Caco-2 (cell line): ENCODE measurements at regions of chr9 and their contacts with region 1.

Region 1: DNA sequence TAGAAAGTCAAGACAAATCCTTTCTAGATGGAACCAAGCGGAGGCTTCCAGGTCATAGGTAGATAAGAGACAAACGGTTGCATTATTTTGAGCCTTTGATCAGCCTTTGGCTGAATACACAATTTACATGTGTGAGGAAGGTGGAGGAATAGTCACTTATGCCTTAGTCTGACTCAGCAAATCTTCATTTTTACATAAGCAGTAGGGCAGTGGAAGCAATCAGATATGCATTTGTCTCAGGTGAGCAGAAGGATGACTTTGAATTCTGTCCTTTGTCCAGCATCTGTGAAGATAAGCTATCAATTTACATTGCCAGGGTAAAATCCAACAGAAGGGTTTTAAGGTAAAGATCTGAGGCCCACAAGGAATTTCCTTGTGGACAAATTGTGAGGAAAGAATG is 23.8 kb downstream of the TUSC1 start:
- DNase-seq: peak in 1 of 2 experiments; percentile 12
- H3K4me3 ChIP-seq: no peak overlapping the region
- H3K4me3 Mint-ChIP-seq: no peak overlapping the region
- H3K27ac Mint-ChIP-seq: no peak overlapping the region
- H3K4me1 ChIP-seq: 0 out of 2 replicates have a peak, but pooled peaks cover 4% of the 10 kb centered on the region
- H3K4me1 Mint-ChIP-seq: peaks cover 8% of the 10 kb centered on the region
- H3K27me3 ChIP-seq: no peaks in the 10 kb centered on the region
- H3K27me3 Mint-ChIP-seq: no peaks in the 10 kb centered on the region
- CTCF ChIP-seq: no peak

Region 2: GRCh38 chr9:25562111-25562510 is 92.3 kb before region 1 on chr9:
- CTCF ChIA-PET with region 1: no interaction called
- POLR2A ChIA-PET with region 1: no interaction called
- intact Hi-C with region 1: loop called (anchors 1 kb)
- DNase-seq: peak in 1 of 2 experiments; percentile 0
- H3K4me3 ChIP-seq: no peak overlapping the region
- H3K4me3 Mint-ChIP-seq: no peak overlapping the region
- H3K27ac Mint-ChIP-seq: no peak overlapping the region
- H3K4me1 ChIP-seq: no peaks in the 10 kb centered on the region
- H3K4me1 Mint-ChIP-seq: no peaks in the 10 kb centered on the region
- H3K27me3 ChIP-seq: no peaks in the 10 kb centered on the region
- H3K27me3 Mint-ChIP-seq: no peaks in the 10 kb centered on the region
- CTCF ChIP-seq: no peak

Region 3: GRCh38 chr9:25636026-25636425 is 18.4 kb before region 1 on chr9:
- CTCF ChIA-PET with region 1: no interaction called
- POLR2A ChIA-PET with region 1: no interaction called
- intact Hi-C with region 1: loop called (anchors 2 kb)
- DNase-seq: no peak
- H3K4me3 ChIP-seq: no peak overlapping the region
- H3K4me3 Mint-ChIP-seq: no peak overlapping the region
- H3K27ac Mint-ChIP-seq: no peak overlapping the region
- H3K4me1 ChIP-seq: no peaks in the 10 kb centered on the region
- H3K4me1 Mint-ChIP-seq: no peaks in the 10 kb centered on the region
- H3K27me3 ChIP-seq: no peaks in the 10 kb centered on the region
- H3K27me3 Mint-ChIP-seq: no peaks in the 10 kb centered on the region
- CTCF ChIP-seq: no peak